ENCODE measurements at regions of chr14 and their contacts with region 1.

Region 1: GRCh38 chr14:70972107-70972976 is 65.1 kb downstream of the PCNX1 start:
- DNase-seq: peak; percentile 75 to 93
- ATAC-seq: peak; percentile 86 to 93 (median 87)
- H3K4me3 ChIP-seq: no peak overlapping the region
- H3K4me3 Mint-ChIP-seq: no peak overlapping the region
- H3K27ac ChIP-seq: no peak overlapping the region
- H3K27ac Mint-ChIP-seq: peak overlapping the region; percentile 0 to 68
- H3K4me1 ChIP-seq: peaks cover 3% of the 10 kb centered on the region
- H3K4me1 Mint-ChIP-seq: peaks cover 14 to 16% of the 10 kb centered on the region in 2 donors
- H3K27me3 ChIP-seq: no peaks in the 10 kb centered on the region
- H3K27me3 Mint-ChIP-seq: no peaks in the 10 kb centered on the region
- CTCF ChIP-seq: peak; percentile 90

Region 2: GRCh38 chr14:69818757-69819191 is 1153.6 kb before region 1 on chr14:
- intact Hi-C with region 1: loop called (anchors 5 kb)
- DNase-seq: peak; percentile 26 to 81
- ATAC-seq: peak; percentile 78 to 82 (median 80)
- H3K4me3 ChIP-seq: no peak overlapping the region
- H3K4me3 Mint-ChIP-seq: no peak overlapping the region
- H3K27ac ChIP-seq: no peak overlapping the region
- H3K27ac Mint-ChIP-seq: no peak overlapping the region
- H3K4me1 ChIP-seq: no peaks in the 10 kb centered on the region
- H3K4me1 Mint-ChIP-seq: peaks cover 0 to 5% of the 10 kb centered on the region in 2 donors
- H3K27me3 ChIP-seq: no peaks in the 10 kb centered on the region
- H3K27me3 Mint-ChIP-seq: peaks cover 0 to 2% of the 10 kb centered on the region in 2 donors
- CTCF ChIP-seq: peak; percentile 82

Region 3: DNA sequence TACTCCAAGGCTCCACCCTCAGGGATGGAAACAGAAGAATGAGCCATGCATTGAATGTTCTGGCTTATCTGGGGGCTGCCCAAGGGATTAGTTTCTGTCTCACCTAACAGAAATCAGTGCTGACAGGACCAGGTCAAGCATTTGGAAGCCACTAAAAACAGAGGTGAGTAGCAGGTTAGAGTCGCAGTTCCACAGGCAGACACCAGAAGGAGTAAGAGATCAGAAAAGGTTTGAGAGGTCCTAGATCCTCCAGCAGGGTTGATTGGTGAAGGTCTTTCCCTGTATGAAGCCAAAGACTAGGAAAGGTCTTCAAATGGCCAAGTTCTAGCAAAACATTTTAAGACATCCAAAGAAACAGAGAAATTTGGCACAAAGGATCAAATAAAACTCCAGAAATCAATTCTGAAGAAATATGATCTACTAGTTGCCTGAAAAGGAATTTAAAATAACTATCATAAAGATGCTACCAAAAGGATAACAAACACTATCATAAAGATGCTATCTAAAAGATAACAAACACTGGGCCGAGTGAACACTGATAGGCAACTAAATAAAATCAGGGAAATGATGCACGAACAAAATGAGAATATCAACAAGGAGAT is 350.1 kb before region 1 on chr14:
- intact Hi-C with region 1: loop called (anchors 2 kb)
- DNase-seq: peak in 1 of 2 donors; percentile 79
- ATAC-seq: peak; percentile 60 to 88 (median 67)
- H3K4me3 ChIP-seq: no peak overlapping the region
- H3K4me3 Mint-ChIP-seq: no peak overlapping the region
- H3K27ac ChIP-seq: no peak overlapping the region
- H3K27ac Mint-ChIP-seq: no peak overlapping the region
- H3K4me1 ChIP-seq: no peaks in the 10 kb centered on the region
- H3K4me1 Mint-ChIP-seq: no peaks in the 10 kb centered on the region
- H3K27me3 ChIP-seq: peaks cover 2% of the 10 kb centered on the region
- H3K27me3 Mint-ChIP-seq: peaks cover 22 to 60% of the 10 kb centered on the region in 2 donors
- CTCF ChIP-seq: peak; percentile 76

Region 4: GRCh38 chr14:70821584-70822529 is 150.5 kb before region 1 on chr14:
- intact Hi-C with region 1: loop called (anchors 1 kb)
- DNase-seq: peak; percentile 47 to 71
- ATAC-seq: peak; percentile 42 to 47 (median 46)
- H3K4me3 ChIP-seq: peak overlapping the region; percentile 52
- H3K4me3 Mint-ChIP-seq: peak overlapping the region; percentile 91
- H3K27ac ChIP-seq: no peak overlapping the region
- H3K27ac Mint-ChIP-seq: peak overlapping the region in 1 of 2 donors; percentile 79
- H3K4me1 ChIP-seq: peaks cover 25% of the 10 kb centered on the region
- H3K4me1 Mint-ChIP-seq: peaks cover 14 to 20% of the 10 kb centered on the region in 2 donors
- H3K27me3 ChIP-seq: peaks cover 19% of the 10 kb centered on the region
- H3K27me3 Mint-ChIP-seq: peaks cover 17 to 29% of the 10 kb centered on the region in 2 donors
- CTCF ChIP-seq: no peak

Region 5: DNA sequence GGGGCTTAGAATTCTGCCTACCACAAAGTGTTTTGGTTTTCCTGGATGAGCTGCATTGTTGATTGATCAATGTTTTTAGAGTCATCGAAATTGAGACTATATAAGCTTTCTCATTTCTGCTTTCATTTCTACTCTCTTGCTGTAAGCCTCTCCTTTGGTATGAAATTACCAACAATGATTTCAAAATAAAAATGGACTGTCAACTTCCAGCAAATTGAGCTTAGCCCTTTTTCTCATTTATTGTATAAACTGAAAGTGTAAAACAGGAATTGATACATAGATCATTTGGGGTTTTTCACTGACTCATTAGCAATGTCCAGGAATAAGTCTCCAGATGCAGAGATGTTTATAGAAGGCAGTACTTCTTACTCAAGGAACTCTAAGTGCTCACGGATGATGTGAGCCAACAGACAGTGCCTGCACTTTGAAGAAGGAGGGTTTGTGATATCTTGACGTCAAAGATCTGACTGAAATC is 85.1 kb before region 1 on chr14:
- intact Hi-C with region 1: loop called (anchors 5 kb)
- DNase-seq: peak in 1 of 2 donors; percentile 39
- ATAC-seq: no peak
- H3K4me3 ChIP-seq: no peak overlapping the region
- H3K4me3 Mint-ChIP-seq: peak overlapping the region; percentile 75
- H3K27ac ChIP-seq: peak overlapping the region; percentile 45
- H3K27ac Mint-ChIP-seq: peak overlapping the region; percentile 85 to 87
- H3K4me1 ChIP-seq: peaks cover 56% of the 10 kb centered on the region
- H3K4me1 Mint-ChIP-seq: peaks cover 54 to 72% of the 10 kb centered on the region in 2 donors
- H3K27me3 ChIP-seq: no peaks in the 10 kb centered on the region
- H3K27me3 Mint-ChIP-seq: peaks cover 0 to 11% of the 10 kb centered on the region in 2 donors
- CTCF ChIP-seq: no peak

Region 6: DNA sequence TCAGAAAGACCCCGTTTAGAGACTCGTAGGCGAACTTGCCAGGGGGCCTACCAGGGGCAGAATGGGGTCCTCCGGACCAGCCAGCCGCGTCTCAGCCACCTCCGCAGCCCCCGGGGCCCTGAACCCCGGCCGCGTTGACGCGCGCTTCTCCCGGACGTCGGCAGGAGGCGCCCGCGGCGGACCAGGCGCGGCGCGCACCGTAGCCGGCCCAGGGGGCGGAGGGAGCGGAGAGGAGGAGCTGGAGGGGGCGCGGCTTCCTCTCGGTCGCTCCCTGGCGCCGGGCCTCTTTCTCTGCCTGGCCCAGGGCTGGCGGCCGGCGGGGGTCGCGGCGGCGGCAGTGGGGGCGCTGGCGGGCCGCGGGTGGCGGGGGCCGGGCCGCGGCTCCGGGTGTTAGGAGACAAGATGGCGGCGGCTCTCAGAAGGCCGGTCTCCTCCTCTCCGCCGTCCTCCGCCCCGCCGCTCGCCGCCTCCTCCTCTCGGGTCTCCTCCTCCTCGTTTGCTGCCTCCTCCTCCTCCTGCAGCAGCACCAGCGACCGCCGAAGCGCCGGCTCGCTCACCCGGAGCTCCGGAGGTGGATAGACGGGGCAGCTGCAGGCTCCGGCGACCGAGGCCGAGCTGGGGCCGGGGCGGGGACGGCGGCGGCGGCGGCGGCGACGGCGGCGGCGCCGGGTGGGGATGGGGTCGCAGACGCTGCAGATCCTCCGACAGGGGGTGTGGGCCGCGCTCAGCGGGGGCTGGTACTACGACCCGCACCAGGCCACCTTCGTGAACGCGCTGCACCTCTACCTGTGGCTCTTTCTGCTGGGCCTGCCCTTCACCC is 65.0 kb before region 1 on chr14 and contains the start of gene PCNX1:
- intact Hi-C with region 1: loop called (anchors 2 kb)
- DNase-seq: peak; percentile 89 to 93
- ATAC-seq: peak; percentile 81 to 92 (median 84)
- H3K4me3 ChIP-seq: peak within 1 kb of the TSS; percentile 97
- H3K4me3 Mint-ChIP-seq: peak within 1 kb of the TSS; percentile 93
- H3K27ac ChIP-seq: peak within 1 kb of the TSS; percentile 93
- H3K27ac Mint-ChIP-seq: peak within 1 kb of the TSS; percentile 92 to 100
- H3K4me1 ChIP-seq: peaks cover 15% of the 10 kb centered on the region
- H3K4me1 Mint-ChIP-seq: peaks cover 45 to 47% of the 10 kb centered on the region in 2 donors
- H3K27me3 ChIP-seq: no peaks in the 10 kb centered on the region
- H3K27me3 Mint-ChIP-seq: no peaks in the 10 kb centered on the region
- CTCF ChIP-seq: peak; percentile 85
- total RNA-seq, gene PCNX1: 79.8 to 124 (median 119) TPM

Region 7: GRCh38 chr14:71011479-71011878 is 39.1 kb after region 1 on chr14:
- intact Hi-C with region 1: loop called (anchors 1 kb)
- DNase-seq: peak in 1 of 2 donors; percentile 33
- ATAC-seq: no peak
- H3K4me3 ChIP-seq: no peak overlapping the region
- H3K4me3 Mint-ChIP-seq: no peak overlapping the region
- H3K27ac ChIP-seq: no peak overlapping the region
- H3K27ac Mint-ChIP-seq: peak overlapping the region; percentile 47 to 69
- H3K4me1 ChIP-seq: no peaks in the 10 kb centered on the region
- H3K4me1 Mint-ChIP-seq: peaks cover 18 to 23% of the 10 kb centered on the region in 2 donors
- H3K27me3 ChIP-seq: no peaks in the 10 kb centered on the region
- H3K27me3 Mint-ChIP-seq: no peaks in the 10 kb centered on the region
- CTCF ChIP-seq: peak; percentile 54

Region 8: GRCh38 chr14:71362920-71363584 is 390.7 kb after region 1 on chr14:
- intact Hi-C with region 1: no loop called
- DNase-seq: no peak
- ATAC-seq: no peak
- H3K4me3 ChIP-seq: no peak overlapping the region
- H3K4me3 Mint-ChIP-seq: no peak overlapping the region
- H3K27ac ChIP-seq: peak overlapping the region; percentile 74
- H3K27ac Mint-ChIP-seq: peak overlapping the region in 1 of 2 donors; percentile 58
- H3K4me1 ChIP-seq: peaks cover 2% of the 10 kb centered on the region
- H3K4me1 Mint-ChIP-seq: peaks cover 42 to 47% of the 10 kb centered on the region in 2 donors
- H3K27me3 ChIP-seq: no peaks in the 10 kb centered on the region
- H3K27me3 Mint-ChIP-seq: no peaks in the 10 kb centered on the region
- CTCF ChIP-seq: no peak

Measured in natural killer cell (primary cell).